Colonic mucosa (tissue), 4 donors: ENCODE measurements at regions of chr1 and their contacts with region 1.

Region 1: GRCh38 chr1:158087320-158087927 is 93.3 kb upstream of the CD1D start:
- DNase-seq: peak; percentile 58
- H3K4me3 ChIP-seq: no peak overlapping the region
- H3K27ac ChIP-seq: no peak overlapping the region
- H3K4me1 ChIP-seq: no peaks in the 10 kb centered on the region
- H3K27me3 ChIP-seq: no peaks in the 10 kb centered on the region
- CTCF ChIP-seq: peak; percentile 82

Region 2: DNA sequence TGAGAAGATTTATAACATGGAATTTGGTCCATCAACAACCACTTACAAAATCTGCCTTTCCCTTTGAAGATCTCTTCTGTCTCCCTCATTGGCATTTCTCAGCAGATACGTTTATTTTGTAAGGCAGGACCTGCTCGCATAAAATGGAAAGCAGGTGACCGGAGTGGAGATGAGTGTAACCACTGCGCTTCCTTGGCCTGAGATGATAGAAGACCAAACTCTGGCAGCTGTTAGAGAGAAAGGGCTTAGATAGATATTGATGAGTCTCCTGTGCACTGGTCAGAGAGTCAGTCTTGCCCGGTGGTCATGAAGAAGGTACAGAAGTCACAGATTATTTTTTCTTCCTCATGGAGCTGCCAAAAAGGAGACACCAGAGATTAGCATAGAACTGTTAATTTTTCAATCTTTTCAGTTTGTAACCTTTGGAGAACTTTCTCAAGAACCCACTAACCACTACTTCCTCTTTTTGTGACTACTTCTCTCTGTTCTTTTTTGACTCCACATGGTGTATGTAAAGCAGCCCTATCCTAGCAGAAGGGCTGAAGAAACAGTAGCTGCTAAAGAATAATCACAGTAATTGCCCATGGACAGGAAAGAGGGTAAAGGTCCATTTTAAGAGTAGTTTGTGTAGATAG is 434.4 kb before region 1 on chr1:
- intact Hi-C with region 1: no loop called
- DNase-seq: no peak
- H3K4me3 ChIP-seq: no peak overlapping the region
- H3K27ac ChIP-seq: no peak overlapping the region
- H3K4me1 ChIP-seq: no peaks in the 10 kb centered on the region
- H3K27me3 ChIP-seq: no peaks in the 10 kb centered on the region
- CTCF ChIP-seq: no peak

Region 3: GRCh38 chr1:157932069-157932468 is 155.4 kb before region 1 on chr1:
- intact Hi-C with region 1: no loop called
- DNase-seq: no peak
- H3K4me3 ChIP-seq: no peak overlapping the region
- H3K27ac ChIP-seq: no peak overlapping the region
- H3K4me1 ChIP-seq: no peaks in the 10 kb centered on the region
- H3K27me3 ChIP-seq: no peaks in the 10 kb centered on the region
- CTCF ChIP-seq: no peak

Region 4: GRCh38 chr1:157992031-157992832 is 95.2 kb before region 1 on chr1:
- intact Hi-C with region 1: loop called (anchors 1 kb)
- DNase-seq: peak; percentile 74
- H3K4me3 ChIP-seq: no peak overlapping the region
- H3K27ac ChIP-seq: no peak overlapping the region
- H3K4me1 ChIP-seq: no peaks in the 10 kb centered on the region
- H3K27me3 ChIP-seq: no peaks in the 10 kb centered on the region
- CTCF ChIP-seq: peak; percentile 85

Region 5: GRCh38 chr1:158002631-158003405 is 84.6 kb before region 1 on chr1:
- intact Hi-C with region 1: no loop called
- DNase-seq: no peak
- H3K4me3 ChIP-seq: no peak overlapping the region
- H3K27ac ChIP-seq: no peak overlapping the region
- H3K4me1 ChIP-seq: no peaks in the 10 kb centered on the region
- H3K27me3 ChIP-seq: no peaks in the 10 kb centered on the region
- CTCF ChIP-seq: no peak

Region 6: GRCh38 chr1:158035976-158036583 is 51.3 kb before region 1 on chr1:
- intact Hi-C with region 1: loop called (anchors 5 kb)
- DNase-seq: peak; percentile 42
- H3K4me3 ChIP-seq: no peak overlapping the region
- H3K27ac ChIP-seq: no peak overlapping the region
- H3K4me1 ChIP-seq: no peaks in the 10 kb centered on the region
- H3K27me3 ChIP-seq: no peaks in the 10 kb centered on the region
- CTCF ChIP-seq: peak; percentile 68